GM10248 (cell line): ENCODE measurements at regions of chr1 and their contacts with region 1.

Region 1: GRCh38 chr1:111197598-111198284 is 2.7 kb downstream of the DENND2D start:
- DNase-seq: no peak
- CTCF ChIP-seq: peak; percentile 61

Region 2: GRCh38 chr1:110857964-110858948 is 339.5 kb before region 1 on chr1:
- CTCF ChIA-PET with region 1: no interaction called
- POLR2A ChIA-PET with region 1: no interaction called
- DNase-seq: no peak
- CTCF ChIP-seq: no peak

Region 3: GRCh38 chr1:111183308-111184069 is 14.3 kb before region 1 on chr1:
- CTCF ChIA-PET with region 1: interaction called, 22 read pairs
- POLR2A ChIA-PET with region 1: no interaction called
- DNase-seq: no peak
- CTCF ChIP-seq: no peak

Region 4: GRCh38 chr1:111222308-111223125 is 24.8 kb after region 1 on chr1:
- CTCF ChIA-PET with region 1: interaction called, 158 read pairs
- POLR2A ChIA-PET with region 1: interaction called, 6 read pairs
- DNase-seq: peak; percentile 68
- CTCF ChIP-seq: peak; percentile 82

Region 5: DNA sequence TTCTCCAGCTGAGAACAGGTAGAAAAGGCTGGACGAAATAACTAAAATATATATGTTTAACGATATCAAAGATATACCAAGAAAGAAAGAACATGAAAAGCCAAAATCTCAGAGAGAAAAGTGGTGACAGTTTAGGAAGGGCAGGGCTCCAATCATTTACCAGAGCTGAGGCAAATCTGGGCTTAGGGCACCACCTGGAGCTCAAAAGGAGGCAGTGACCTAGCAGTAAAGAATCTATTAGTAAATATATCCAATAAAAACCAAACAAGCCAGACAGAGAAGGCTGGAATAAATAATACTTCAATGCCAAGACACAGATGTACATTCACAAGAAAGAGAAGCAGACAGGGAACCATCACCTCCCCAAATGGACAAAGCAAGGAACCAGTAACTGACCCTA is 136.4 kb after region 1 on chr1:
- CTCF ChIA-PET with region 1: interaction called, 13 read pairs
- POLR2A ChIA-PET with region 1: interaction called, 3 read pairs
- DNase-seq: peak; percentile 57
- CTCF ChIP-seq: peak; percentile 58